ENCODE measurements at regions of chr4 and their contacts with region 1.

Region 1: DNA sequence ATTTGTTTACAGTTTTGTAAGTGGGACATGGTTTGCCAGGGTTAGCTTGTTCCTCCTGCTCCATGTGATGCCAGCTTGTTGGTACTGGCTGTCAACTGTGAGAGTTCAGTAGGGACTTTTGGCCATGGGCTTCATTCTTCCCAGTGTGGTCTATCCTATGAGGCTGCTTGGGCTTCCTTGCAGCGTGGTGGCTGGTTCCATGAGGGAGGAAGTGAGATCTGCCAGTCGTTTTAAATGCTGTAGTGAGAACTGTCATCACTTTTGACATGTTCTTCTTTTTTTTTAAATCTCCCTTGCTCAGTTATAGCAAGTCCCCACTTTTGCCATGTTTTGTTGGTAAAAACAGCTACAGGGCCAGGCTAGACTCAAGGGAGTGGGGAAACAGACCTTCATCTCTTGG is 15.9 kb downstream of the NSD2 start:
- DNase-seq: no peak
- ATAC-seq: no peak
- H3K4me3 ChIP-seq: no peak overlapping the region
- H3K27ac ChIP-seq: no peak overlapping the region
- H3K4me1 ChIP-seq: peaks cover 7% of the 10 kb centered on the region
- H3K27me3 ChIP-seq: no peaks in the 10 kb centered on the region
- CTCF ChIP-seq: no peak
- EP300 ChIP-seq: no peak
- POLR2A ChIP-seq: no peak
- RAD21 ChIP-seq: no peak

Region 2: GRCh38 chr4:1859389-1859753 is 27.7 kb before region 1 on chr4:
- CTCF ChIA-PET with region 1: no interaction called
- POLR2A ChIA-PET with region 1: no interaction called
- in situ Hi-C with region 1: no loop called
- intact Hi-C with region 1: no loop called
- DNase-seq: no peak
- ATAC-seq: no peak
- H3K4me3 ChIP-seq: no peak overlapping the region
- H3K27ac ChIP-seq: no peak overlapping the region
- H3K4me1 ChIP-seq: peaks cover 68% of the 10 kb centered on the region
- H3K27me3 ChIP-seq: no peaks in the 10 kb centered on the region; a peak in 1 of 5 replicates
- CTCF ChIP-seq: peak; percentile 68
- EP300 ChIP-seq: no peak
- POLR2A ChIP-seq: no peak
- RAD21 ChIP-seq: peak; percentile 36; the same call in 1 of the 2 replicates

Region 3: DNA sequence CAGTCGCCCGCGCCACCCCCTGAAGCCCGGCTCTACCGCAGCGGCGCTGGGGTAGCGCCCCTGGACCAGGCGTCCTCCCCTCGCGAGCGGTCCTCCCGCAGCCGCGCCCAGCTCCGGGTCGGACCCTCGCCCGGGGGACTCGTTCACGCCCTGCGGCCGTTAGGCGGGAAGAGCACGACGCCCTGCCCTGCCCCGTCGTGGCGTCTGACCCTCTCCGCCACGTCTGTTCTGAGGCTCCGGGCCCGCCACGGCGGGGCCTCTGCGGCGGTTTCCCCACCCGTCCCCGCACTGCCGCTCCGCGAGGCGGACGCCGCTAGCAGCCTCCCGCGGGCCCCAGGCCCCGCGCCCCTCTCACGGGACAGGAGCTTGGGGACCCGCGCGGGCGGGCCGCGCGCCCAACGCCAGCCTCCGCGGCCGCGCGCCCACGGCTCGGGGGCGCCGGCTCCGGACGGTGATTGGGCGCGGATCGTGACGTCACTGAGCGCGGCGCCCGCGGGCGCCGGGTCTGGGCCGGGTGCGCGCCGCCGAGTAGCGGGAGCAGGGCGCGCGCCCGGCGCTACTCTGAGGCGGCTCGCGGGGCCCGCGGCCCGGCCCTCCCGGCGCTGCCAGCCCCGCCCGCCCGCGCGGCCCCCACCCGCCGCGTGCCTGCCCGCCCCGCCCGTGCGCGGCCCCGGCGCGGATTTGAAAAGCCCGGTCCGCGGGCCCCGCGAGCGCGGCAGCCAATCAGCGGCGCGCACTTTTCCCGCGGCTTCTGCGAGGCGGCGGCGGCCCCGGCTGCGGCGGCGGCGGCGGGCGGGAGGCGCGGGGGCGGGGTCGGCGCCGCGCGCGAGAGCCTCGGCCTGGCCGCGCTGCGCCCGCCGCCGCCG is 16.2 kb before region 1 on chr4 and contains the start of gene NSD2:
- CTCF ChIA-PET with region 1: no interaction called
- POLR2A ChIA-PET with region 1: interaction called, 4 read pairs
- in situ Hi-C with region 1: no loop called
- intact Hi-C with region 1: loop called (anchors 2 kb)
- DNase-seq: peak; percentile 67
- ATAC-seq: peak; percentile 59
- H3K4me3 ChIP-seq: peak within 1 kb of the TSS; percentile 77 to 94 (median 92)
- H3K27ac ChIP-seq: peak within 1 kb of the TSS; percentile 99
- H3K4me1 ChIP-seq: peaks cover 74% of the 10 kb centered on the region
- H3K27me3 ChIP-seq: no peaks in the 10 kb centered on the region
- CTCF ChIP-seq: no peak
- EP300 ChIP-seq: no peak
- POLR2A ChIP-seq: peak in 1 of 2 experiments; percentile 63; a peak in 2 of 4 replicates
- RAD21 ChIP-seq: peak; percentile 71
- total RNA-seq, gene NSD2: 62.0 and 65.9 TPM in 2 replicates

Region 4: GRCh38 chr4:1922821-1923220 is 35.8 kb after region 1 on chr4:
- CTCF ChIA-PET with region 1: no interaction called
- POLR2A ChIA-PET with region 1: no interaction called
- in situ Hi-C with region 1: no loop called
- intact Hi-C with region 1: no loop called
- DNase-seq: no peak
- ATAC-seq: no peak
- H3K4me3 ChIP-seq: no peak overlapping the region
- H3K27ac ChIP-seq: no peak overlapping the region
- H3K4me1 ChIP-seq: no peaks in the 10 kb centered on the region
- H3K27me3 ChIP-seq: no peaks in the 10 kb centered on the region
- CTCF ChIP-seq: no peak
- EP300 ChIP-seq: no peak
- POLR2A ChIP-seq: no peak
- RAD21 ChIP-seq: no peak

Measured in HepG2 (cell line).